Lower leg skin (tissue), 4 donors: ENCODE measurements at regions of chr15 and their contacts with region 1.

Region 1: DNA sequence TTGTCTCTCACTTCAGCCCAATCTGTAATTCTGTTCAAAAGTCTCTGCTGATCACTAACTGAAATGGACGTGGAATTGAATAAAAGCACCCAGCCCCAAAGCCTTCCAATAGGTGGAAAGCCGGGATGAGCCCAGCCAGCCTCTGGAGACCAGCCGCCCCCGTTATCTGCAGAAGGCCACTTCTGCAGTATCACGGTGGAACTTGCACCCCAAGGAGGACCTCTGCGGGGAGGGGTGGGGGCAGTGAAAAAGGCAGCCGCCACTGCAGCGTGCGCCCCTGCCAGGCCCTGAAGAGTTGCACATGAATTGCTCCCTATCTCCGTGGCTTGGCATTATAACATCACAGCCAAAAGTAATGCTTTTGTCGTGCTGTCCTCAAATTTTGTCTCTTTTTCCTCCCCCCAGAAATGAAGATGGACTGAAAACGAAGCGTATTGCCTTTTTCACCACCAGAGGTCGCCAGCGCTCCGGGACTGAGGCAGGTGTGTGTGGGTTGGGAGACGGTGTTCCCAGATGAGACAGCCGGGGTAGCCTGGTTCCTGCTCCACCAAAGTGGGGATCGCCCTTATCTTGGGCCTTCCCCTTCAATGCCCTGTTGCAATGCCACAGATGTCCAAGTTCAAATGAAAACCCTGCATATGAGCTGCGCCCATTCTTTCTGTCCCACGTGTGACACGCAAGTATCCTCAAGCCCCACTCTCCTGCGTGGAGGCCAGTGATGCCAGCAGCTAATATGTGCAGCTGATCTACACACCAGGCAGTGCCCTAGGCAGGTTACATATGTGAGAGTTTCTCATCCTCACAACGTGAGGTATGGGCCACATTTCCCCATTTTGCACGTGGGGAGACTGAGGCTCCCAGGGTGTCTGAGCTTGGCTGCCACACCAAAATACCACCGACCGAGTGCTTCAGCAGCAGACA is 96.0 kb downstream of the LRRK1 start:
- DNase-seq: peak; percentile 31 to 91
- H3K4me3 ChIP-seq: no peak overlapping the region
- CTCF ChIP-seq: peak in 1 of 3 donors; percentile 42
- POLR2A ChIP-seq: no peak

Region 2: GRCh38 chr15:100627789-100628395 is 387.3 kb before region 1 on chr15:
- intact Hi-C with region 1: loop called (anchors 5 kb)
- DNase-seq: peak; percentile 74 to 90
- H3K4me3 ChIP-seq: no peak overlapping the region
- CTCF ChIP-seq: peak in 1 of 3 donors; percentile 43
- POLR2A ChIP-seq: no peak

Region 3: DNA sequence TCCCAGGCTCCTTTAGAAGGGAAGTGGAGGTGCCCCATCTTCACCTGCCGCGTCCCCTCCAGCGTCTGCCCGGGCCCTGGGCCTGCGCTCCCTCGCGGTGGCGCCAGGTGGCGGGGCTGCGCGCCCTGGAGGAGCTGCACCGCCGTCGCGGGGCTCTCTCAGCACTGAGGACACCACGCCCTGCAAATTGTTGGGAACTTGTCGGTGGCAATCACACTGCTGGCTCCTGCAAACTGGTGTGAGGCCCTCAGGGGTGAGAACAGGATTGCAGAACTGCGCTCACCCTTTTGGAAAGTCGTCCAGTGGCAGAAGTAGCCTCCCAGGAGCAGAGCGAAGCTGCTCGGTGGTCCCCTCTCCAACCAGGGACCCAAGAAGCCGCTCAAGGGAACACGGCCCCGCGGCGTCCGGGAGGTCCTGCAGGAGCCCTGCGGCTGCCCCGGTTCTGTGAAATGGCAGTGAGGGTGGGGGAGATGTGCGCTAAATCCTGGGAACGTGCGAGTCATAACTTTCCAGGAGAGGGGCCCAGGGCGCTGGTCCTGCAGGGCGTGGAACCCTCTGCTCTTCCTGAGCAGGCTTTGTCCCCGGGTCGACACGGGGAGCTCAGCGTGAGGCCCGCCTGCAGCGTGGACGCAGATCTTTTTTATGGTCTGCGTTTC is 97.0 kb before region 1 on chr15:
- intact Hi-C with region 1: loop called (anchors 1 kb)
- DNase-seq: peak; percentile 76 to 96
- H3K4me3 ChIP-seq: peak overlapping the region; percentile 55
- CTCF ChIP-seq: peak in 1 of 3 donors; percentile 39
- POLR2A ChIP-seq: no peak

Region 4: DNA sequence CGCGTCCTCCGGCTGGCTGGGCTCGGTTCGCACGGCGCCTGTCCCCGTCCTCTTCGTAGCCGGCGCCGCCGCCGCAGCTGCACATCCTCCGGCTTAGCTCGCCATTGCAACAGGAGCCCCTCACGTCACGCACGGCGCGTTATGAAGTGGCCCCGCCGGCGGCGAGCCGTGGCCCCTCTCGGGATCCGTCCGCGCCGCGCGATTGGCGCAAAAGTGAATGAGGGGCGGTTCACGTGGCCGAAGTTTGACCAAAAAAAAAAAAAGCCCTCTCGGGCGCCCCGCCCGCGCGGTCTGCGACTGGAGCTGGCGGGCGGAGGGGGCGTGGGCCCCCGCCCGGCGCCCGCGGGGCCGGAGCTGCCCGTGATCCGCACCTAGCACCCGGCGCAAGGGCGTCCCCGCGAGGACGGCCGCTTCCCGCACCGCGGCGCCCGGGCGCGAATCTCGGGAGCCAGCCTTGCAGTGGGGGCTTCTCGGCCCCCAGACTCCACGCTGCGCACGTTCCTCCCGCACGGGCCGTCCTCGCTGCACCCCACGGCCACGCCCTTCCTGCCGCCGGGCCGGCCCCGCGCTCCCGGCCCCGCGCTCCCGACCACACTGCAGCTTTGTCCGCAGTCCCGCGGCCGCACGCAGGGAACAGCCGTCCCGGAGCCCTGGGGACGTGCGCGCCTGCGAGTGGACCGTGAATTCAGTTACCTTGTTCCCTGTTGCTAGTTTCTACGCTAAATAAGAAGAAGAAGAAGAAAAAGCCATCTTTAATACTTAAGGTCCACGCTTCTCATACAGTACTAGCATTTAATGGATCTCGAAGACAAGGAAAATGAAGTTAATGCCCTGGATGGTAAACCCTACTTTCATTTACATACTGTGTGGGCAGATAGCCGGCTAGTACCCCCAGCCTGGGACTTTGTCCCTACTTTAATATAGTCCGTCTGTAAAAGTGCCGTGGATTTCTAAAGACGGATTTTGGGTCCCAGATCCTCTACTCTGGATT is 236.9 kb after region 1 on chr15 and contains the start of gene CHSY1:
- intact Hi-C with region 1: loop called (anchors 5 kb)
- DNase-seq: peak; percentile 87 to 98
- H3K4me3 ChIP-seq: peak within 1 kb of the TSS; percentile 69
- CTCF ChIP-seq: no peak
- POLR2A ChIP-seq: peak in 1 of 2 donors; percentile 46
- total RNA-seq, gene CHSY1: 23.7 to 32.8 (median 29.9) TPM

Region 5: GRCh38 chr15:101439285-101439919 is 424.2 kb after region 1 on chr15:
- intact Hi-C with region 1: no loop called
- DNase-seq: peak in 1 of 2 donors; percentile 53
- H3K4me3 ChIP-seq: no peak overlapping the region
- CTCF ChIP-seq: no peak
- POLR2A ChIP-seq: no peak